Lower leg skin (tissue), 4 donors: ENCODE measurements at regions of chr6 and their contacts with region 1.

Region 1: DNA sequence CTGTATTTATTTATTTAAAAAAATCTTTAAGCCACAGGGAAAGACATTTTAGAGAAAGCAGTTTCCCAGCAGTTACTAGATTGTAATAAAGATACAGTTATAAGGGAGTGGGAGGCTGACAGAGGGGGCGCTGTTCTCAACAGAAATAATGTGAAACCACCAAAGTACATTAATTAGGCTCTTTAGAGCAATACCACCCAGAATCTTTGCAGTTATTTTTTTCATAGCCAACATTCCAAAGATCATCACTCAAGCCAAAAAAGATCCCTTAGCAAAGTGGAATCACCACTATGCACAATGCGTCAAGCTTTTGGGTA is 331.3 kb upstream of the DEFB112 start:
- DNase-seq: no peak
- H3K4me3 ChIP-seq: no peak overlapping the region
- CTCF ChIP-seq: no peak
- POLR2A ChIP-seq: no peak

Region 2: DNA sequence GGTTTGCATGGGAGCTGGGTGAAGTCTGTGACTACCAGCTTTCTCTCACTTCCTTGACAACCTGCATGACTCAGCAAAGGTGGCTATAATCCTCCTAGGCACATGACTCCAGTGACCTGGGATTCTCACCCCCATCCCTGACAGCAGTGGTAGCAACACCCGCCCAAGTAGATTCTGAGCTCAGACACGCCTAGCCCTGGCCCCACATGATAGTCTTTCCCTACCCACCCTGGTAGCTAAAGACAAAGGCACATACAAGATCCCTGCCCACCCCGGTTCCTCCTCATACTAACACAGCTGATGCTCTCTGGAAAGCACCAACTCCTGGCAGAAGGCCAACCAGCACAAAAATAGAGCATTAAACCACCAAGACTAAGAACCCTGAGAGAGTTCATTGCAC is 488.8 kb before region 1 on chr6:
- intact Hi-C with region 1: no loop called
- DNase-seq: no peak
- H3K4me3 ChIP-seq: no peak overlapping the region
- CTCF ChIP-seq: no peak
- POLR2A ChIP-seq: no peak

Region 3: DNA sequence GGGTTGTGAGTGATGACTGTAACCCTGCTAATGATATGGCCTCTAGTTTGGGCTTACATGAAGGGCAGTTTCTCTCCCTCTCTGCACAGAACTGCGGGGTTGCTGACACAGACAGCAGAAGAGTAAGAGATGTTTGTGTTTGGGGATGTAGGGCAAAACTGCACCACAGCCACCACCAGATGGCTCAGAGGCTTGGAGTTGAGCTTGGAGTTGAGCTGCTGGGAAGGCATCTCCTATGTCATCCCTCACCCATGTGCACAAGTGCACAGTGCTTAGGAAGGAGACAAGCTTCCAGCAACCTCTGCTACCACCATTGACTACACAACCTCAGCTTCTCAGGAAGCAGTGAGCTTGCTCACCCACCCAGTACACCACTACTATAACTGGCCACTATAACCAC is 27.5 kb before region 1 on chr6:
- intact Hi-C with region 1: loop called (anchors 2 kb)
- DNase-seq: no peak
- H3K4me3 ChIP-seq: no peak overlapping the region
- CTCF ChIP-seq: no peak
- POLR2A ChIP-seq: no peak

Region 4: GRCh38 chr6:51112771-51113170 is 731.7 kb after region 1 on chr6:
- intact Hi-C with region 1: no loop called
- DNase-seq: no peak
- H3K4me3 ChIP-seq: no peak overlapping the region
- CTCF ChIP-seq: no peak
- POLR2A ChIP-seq: no peak